ENCODE measurements at regions of chr2 and their contacts with region 1.

Region 1: DNA sequence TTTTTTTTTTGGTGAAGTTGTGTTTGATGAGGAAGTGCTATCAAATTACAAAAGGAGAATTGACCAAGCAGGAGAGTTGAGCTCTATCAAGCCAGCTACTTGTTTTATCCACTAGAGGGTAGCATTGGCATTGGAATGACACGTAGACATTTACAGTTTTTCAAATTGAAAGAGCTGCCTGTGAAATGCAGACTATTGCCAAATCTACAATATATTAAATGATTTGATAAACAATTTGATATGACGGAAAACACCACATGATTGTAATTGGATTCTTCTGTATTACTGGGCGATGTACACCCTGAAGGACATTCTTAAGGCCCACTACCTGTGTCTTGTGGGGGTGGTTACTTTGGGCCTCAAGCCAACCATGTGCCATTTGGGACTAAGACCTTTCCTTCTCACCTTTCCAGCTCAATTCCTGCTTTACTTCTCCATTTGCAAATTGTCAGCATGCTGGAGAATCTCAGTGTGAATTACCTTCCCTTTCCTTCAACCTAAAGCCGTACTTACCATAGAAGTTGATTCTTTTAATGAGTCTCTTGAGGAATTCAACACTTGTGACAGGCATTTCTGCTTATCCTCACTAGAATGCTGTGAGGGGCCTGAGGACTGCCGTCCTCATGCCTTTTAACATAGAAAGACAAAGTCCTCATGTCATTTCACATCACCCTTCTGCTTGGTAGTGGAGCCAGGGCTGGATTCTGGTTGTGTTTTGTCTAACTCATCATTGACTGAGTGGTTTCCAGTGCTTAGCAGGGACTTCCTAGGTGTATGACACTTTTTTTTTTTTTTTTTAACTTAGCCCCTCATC is 134.8 kb upstream of the THUMPD2 start:
- DNase-seq: peak; percentile 59
- ATAC-seq: peak; percentile 72
- H3K4me3 ChIP-seq: no peak overlapping the region
- H3K27ac ChIP-seq: no peak overlapping the region
- H3K4me1 ChIP-seq: no peaks in the 10 kb centered on the region
- H3K27me3 ChIP-seq: peaks cover 39% of the 10 kb centered on the region
- CTCF ChIP-seq: peak; percentile 64 to 84 (median 64)
- POLR2A ChIP-seq: no peak
- RAD21 ChIP-seq: peak; percentile 91

Region 2: DNA sequence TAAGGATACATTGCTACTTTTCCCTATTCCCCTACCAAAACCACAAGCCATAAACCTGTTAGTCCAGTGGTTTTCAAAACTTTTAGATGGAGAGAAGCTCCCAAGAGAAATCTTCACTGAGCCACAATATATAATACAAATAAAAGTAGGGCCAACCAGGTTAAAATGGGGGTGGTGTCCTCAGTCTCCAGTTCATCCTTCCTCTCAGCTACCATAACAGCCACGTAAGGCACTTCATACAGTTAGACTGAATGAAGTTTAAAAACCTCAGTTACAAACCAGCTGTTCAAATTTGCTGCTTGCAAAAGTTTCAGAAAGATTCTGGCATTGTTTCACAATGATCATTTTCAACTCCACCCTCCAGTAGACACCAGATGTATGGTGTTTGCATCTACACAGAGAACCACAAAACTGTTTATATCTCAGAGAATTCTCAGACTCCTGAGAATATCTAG is 819.0 kb before region 1 on chr2:
- CTCF ChIA-PET with region 1: no interaction called
- POLR2A ChIA-PET with region 1: no interaction called
- RAD21 ChIA-PET with region 1: no interaction called
- intact Hi-C with region 1: no loop called
- DNase-seq: no peak
- ATAC-seq: no peak
- H3K4me3 ChIP-seq: no peak overlapping the region
- H3K27ac ChIP-seq: no peak overlapping the region
- H3K4me1 ChIP-seq: no peaks in the 10 kb centered on the region; a peak in 1 of 4 replicates
- H3K27me3 ChIP-seq: no peaks in the 10 kb centered on the region
- CTCF ChIP-seq: no peak
- POLR2A ChIP-seq: no peak
- RAD21 ChIP-seq: no peak

Region 3: DNA sequence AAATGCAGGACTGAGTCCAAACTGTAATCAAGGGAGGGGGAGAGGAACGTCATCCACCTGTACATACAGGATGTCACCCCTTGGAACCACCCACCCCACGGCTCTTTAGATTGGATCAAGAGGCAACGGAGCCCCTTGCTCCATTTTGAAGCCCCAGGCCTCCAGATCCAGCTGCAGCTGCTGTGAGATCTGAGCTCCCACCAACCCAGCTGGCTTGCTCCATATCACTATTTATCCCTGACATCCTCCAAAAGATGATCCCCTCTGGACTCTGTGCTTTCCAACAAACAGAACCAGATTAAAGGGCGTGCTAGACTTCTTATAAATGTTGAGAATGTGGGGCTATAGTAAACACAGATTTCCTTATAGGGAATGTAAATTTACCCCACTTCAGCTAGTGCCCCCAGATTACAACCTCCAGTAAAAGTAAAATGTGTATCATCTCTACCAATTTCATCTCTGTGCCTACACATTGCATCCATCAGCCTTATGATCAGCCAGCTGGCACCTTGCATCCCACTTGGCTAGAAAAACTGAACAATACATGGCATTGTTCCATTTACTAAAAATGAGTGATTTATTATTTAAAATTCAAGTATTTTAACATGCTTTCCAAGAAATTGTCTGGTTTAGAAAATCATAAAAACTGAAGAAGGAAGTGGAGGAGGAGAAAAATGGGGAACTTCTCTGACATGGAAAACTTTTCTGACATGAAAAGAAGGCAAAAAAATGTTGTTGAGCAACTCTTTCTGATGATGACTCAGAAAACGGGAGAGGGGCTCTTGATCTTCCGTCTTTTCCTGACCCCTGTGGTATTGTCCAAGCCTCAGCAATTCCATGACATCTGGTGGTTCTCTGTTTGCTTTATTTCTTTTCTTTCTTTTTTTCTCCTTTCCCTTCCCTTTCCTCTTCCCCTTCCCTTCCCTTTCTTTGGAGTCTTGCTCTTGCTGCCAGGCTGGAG is 127.8 kb after region 1 on chr2:
- CTCF ChIA-PET with region 1: no interaction called
- POLR2A ChIA-PET with region 1: no interaction called
- RAD21 ChIA-PET with region 1: no interaction called
- intact Hi-C with region 1: no loop called
- DNase-seq: no peak
- ATAC-seq: no peak
- H3K4me3 ChIP-seq: no peak overlapping the region
- H3K27ac ChIP-seq: no peak overlapping the region
- H3K4me1 ChIP-seq: no peaks in the 10 kb centered on the region
- H3K27me3 ChIP-seq: peaks cover 12% of the 10 kb centered on the region; the same call in 1 of the 2 replicates
- CTCF ChIP-seq: no peak
- POLR2A ChIP-seq: no peak
- RAD21 ChIP-seq: no peak

Region 4: GRCh38 chr2:40244675-40245074 is 330.8 kb after region 1 on chr2:
- CTCF ChIA-PET with region 1: interaction called, 24 read pairs
- POLR2A ChIA-PET with region 1: no interaction called
- RAD21 ChIA-PET with region 1: no interaction called
- intact Hi-C with region 1: no loop called
- DNase-seq: peak; percentile 33
- ATAC-seq: peak; percentile 98
- H3K4me3 ChIP-seq: no peak overlapping the region
- H3K27ac ChIP-seq: no peak overlapping the region
- H3K4me1 ChIP-seq: no peaks in the 10 kb centered on the region
- H3K27me3 ChIP-seq: 0 out of 2 replicates have a peak, but pooled peaks cover 5% of the 10 kb centered on the region
- CTCF ChIP-seq: peak; percentile 42 to 60 (median 59); a peak in 5 of 6 replicates
- POLR2A ChIP-seq: no peak
- RAD21 ChIP-seq: peak; percentile 57

Region 5: DNA sequence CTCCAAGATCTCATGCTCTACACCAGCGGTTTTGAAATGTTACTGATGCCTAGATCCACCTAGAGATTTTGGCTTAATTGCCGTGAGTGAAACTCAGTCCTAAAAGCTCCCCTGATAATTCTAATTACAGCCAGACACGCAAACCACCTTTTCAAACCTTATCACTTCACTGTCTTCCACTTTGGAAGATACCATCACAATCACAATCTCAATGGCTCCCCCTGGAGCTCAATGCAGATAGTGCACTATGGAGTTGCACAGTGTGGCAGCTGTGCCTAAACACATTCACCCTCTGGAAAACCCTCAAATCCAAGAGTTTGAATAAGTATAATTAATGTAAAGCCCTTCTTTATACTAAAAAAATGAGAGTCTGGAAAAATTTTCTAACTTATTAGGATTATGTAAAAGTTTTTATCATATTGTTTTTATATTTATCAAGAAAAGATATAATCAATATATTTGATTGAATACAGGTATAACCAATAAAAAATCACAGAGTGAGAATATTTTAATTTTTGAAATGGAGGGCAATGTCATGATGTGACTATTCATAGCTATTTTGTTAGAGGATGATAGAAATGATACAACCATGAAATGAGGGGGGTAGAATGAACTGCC is 640.9 kb after region 1 on chr2:
- CTCF ChIA-PET with region 1: interaction called, 14 read pairs
- POLR2A ChIA-PET with region 1: interaction called, 3 read pairs
- RAD21 ChIA-PET with region 1: interaction called in 1 of 2 experiments, 5 read pairs
- intact Hi-C with region 1: loop called (anchors 1 kb)
- DNase-seq: peak; percentile 27
- ATAC-seq: peak; percentile 92
- H3K4me3 ChIP-seq: no peak overlapping the region
- H3K27ac ChIP-seq: no peak overlapping the region
- H3K4me1 ChIP-seq: no peaks in the 10 kb centered on the region
- H3K27me3 ChIP-seq: peaks cover 21% of the 10 kb centered on the region
- CTCF ChIP-seq: peak; percentile 59 to 86 (median 84)
- POLR2A ChIP-seq: no peak
- RAD21 ChIP-seq: peak; percentile 71

Region 6: DNA sequence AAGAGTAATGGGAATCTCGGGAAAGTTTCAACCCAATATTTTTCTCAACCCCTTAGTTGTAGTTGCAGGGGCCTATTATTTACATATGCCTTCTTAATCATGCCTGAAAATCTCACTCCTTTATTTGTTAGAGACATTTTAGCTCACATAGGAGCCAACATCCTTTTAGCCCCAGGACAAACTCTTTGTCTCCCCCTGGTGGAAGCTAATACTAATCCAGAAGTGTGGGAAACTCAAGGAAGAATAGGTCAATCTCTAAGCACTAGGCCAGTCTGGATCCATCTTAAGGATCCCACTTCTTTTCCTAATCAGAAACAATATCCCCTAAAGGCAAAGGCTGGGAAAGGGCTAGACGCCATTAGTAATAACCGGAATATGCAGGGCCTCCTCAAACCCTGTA is 1583.1 kb after region 1 on chr2:
- CTCF ChIA-PET with region 1: no interaction called
- POLR2A ChIA-PET with region 1: no interaction called
- RAD21 ChIA-PET with region 1: no interaction called
- intact Hi-C with region 1: loop called (anchors 5 kb)
- DNase-seq: no peak
- ATAC-seq: peak; percentile 50
- H3K4me3 ChIP-seq: no peak overlapping the region
- H3K27ac ChIP-seq: no peak overlapping the region
- H3K4me1 ChIP-seq: no peaks in the 10 kb centered on the region
- H3K27me3 ChIP-seq: no peaks in the 10 kb centered on the region
- CTCF ChIP-seq: peak; percentile 5 to 55 (median 46); a peak in 4 of 6 replicates
- POLR2A ChIP-seq: no peak
- RAD21 ChIP-seq: 0 out of 2 replicates have a peak, but pooled peaks have one; percentile 14

Region 7: DNA sequence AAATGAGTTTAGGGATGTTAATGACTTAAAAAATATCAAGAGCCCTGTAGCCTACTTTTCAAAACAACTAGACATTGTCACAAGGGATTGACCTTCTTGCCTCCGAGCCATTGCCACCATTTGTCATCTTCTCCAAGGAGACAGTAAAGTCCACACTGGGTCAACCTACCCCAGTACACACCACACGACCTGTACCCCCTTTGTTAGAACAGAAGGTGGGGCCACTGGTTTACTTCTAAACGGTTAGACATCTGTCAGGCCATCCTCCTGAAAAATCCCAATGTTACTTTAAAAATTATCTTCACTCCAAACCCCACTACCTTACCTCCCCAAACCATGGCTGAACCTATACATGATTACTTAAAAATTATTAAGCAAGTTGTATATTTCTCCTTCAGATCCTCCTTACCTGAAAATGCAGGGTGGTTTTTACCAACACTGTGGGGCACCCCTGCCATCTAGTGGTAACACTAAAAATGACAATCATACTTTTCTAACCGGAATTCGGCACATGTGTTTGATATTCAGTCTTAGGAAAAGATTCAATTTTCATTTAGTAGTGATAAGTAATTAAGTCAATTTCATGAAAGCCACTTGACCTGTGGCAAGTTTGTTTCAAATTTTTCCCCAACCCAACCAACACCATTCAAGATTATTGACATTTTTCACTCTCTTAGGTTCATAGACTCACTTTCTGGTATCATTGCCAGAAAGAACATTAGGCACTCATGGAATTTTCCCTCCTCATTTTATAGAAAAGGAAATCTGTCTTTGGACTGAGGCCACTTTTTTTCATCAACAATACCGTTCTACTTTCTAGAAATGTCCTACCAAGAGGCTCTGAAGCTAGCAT is 1868.7 kb after region 1 on chr2:
- CTCF ChIA-PET with region 1: interaction called, 10 read pairs
- POLR2A ChIA-PET with region 1: no interaction called
- RAD21 ChIA-PET with region 1: no interaction called
- intact Hi-C with region 1: loop called (anchors 1 kb)
- DNase-seq: peak; percentile 24
- ATAC-seq: peak; percentile 72
- H3K4me3 ChIP-seq: no peak overlapping the region
- H3K27ac ChIP-seq: no peak overlapping the region
- H3K4me1 ChIP-seq: no peaks in the 10 kb centered on the region
- H3K27me3 ChIP-seq: peaks cover 9% of the 10 kb centered on the region; the same call in 1 of the 2 replicates
- CTCF ChIP-seq: peak; percentile 57 to 87 (median 68); a peak in 5 of 6 replicates
- POLR2A ChIP-seq: no peak
- RAD21 ChIP-seq: peak; percentile 82

Measured in HCT116 (cell line).